Posterior vena cava (tissue), 2 donors: ENCODE measurements at regions of chr16 and their contacts with region 1.

Region 1: GRCh38 chr16:76007649-76008048 is 269.6 kb upstream of the CNTNAP4 start:
- DNase-seq: no peak

Region 2: DNA sequence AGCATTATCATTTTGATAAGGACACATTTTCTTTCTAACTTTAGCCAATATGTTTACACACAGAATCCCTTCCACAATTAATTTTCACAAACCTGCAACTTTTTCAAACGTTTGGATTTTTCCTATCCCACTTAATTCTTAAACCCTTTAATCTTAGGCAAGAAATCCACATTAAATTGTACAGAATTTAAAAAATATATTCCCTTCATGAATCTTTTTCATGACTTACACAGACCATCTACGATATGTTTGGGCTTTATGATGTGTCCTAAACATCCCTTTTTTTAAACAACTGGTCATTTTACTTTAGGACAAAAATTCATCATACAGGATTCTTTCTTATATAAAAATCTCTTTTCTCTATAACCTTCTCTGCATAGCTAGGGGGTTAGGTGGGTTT is 28.0 kb after region 1 on chr16:
- intact Hi-C with region 1: loop called in 1 of 2 experiments (anchors 1 kb)
- DNase-seq: no peak

Region 3: GRCh38 chr16:76121636-76122035 is 114.0 kb after region 1 on chr16:
- intact Hi-C with region 1: no loop called
- DNase-seq: no peak